ENCODE measurements at regions of chr2 and their contacts with region 1.

Region 1: GRCh38 chr2:134232868-134233727 is 20.8 kb upstream of the MGAT5 start:
- DNase-seq: no peak
- H3K4me3 ChIP-seq: no peak overlapping the region
- H3K27ac ChIP-seq: no peak overlapping the region
- H3K4me1 ChIP-seq: no peaks in the 10 kb centered on the region
- H3K27me3 ChIP-seq: no peaks in the 10 kb centered on the region; a peak in 2 of 7 replicates
- CTCF ChIP-seq: no peak
- EP300 ChIP-seq: no peak
- POLR2A ChIP-seq: no peak
- RAD21 ChIP-seq: no peak

Region 2: GRCh38 chr2:134216152-134216829 is 16.8 kb before region 1 on chr2:
- CTCF ChIA-PET with region 1: interaction called, 13 read pairs
- POLR2A ChIA-PET with region 1: interaction called, 3 read pairs
- DNase-seq: no peak
- H3K4me3 ChIP-seq: no peak overlapping the region
- H3K27ac ChIP-seq: no peak overlapping the region
- H3K4me1 ChIP-seq: peaks cover 7 to 18% (median 11%) of the 10 kb centered on the region in 4 experiments; a peak in 5 of 7 replicates
- H3K27me3 ChIP-seq: no peaks in the 10 kb centered on the region
- CTCF ChIP-seq: no peak
- EP300 ChIP-seq: no peak
- POLR2A ChIP-seq: no peak
- RAD21 ChIP-seq: no peak

Measured in H1 (cell line).